ENCODE measurements at regions of chr2 and their contacts with region 1.

Region 1: GRCh38 chr2:214966420-214966819 is 156.9 kb upstream of the BARD1 start:
- DNase-seq: no peak
- ATAC-seq: no peak

Region 2: GRCh38 chr2:214987261-214987660 is 20.8 kb after region 1 on chr2:
- intact Hi-C with region 1: no loop called
- DNase-seq: no peak
- ATAC-seq: no peak

Region 3: DNA sequence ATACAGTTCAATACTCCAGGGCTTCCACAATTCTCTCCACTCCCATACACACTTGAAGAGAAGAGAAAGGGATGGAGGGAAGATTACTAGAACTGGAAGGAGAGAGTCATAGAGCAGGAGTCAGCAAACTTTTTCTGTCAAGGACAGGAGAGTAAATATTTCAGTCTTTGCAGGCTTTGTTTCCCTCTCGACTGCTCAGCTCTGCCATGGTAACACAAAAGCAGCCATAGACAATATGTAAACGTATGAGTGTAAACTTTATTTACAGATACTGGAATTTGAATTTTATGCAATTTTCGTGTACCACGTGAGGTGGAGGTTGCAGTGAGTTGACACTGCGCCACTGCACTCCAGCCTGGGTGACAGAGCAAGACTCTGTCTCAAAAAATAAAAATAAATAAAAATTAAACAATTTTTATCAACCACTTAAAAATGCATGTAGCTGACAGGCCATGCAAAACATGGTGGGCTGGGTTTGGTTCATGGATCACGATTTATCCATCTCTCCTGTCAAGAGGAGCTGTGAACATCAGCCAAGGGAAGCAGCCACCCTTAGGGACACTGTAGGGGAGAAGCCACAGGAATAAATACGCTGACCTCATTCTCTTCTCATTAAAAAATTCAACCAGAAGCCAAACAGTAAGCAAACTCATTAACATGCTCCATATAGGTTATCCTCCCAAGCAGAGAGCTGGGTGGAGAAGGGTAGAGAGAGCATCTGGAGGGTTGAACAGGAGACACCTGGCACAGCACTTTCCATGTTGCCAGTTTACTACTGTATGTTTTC is 735.9 kb after region 1 on chr2:
- intact Hi-C with region 1: loop called (anchors 5 kb)
- DNase-seq: no peak
- ATAC-seq: peak; percentile 15